Activated naive CD4-positive, alpha-beta T cell treated with anti-CD3 and anti-CD28 coated beads for 36 hours (primary cell): ENCODE measurements at regions of chr16 and their contacts with region 1.

Region 1: GRCh38 chr16:89401641-89402445 is 88.5 kb downstream of the ANKRD11 start:
- DNase-seq: no peak
- H3K4me3 Mint-ChIP-seq: no peak overlapping the region
- H3K27ac Mint-ChIP-seq: peak overlapping the region; percentile 68
- H3K4me1 Mint-ChIP-seq: peaks cover 80% of the 10 kb centered on the region
- H3K27me3 Mint-ChIP-seq: no peaks in the 10 kb centered on the region

Region 2: DNA sequence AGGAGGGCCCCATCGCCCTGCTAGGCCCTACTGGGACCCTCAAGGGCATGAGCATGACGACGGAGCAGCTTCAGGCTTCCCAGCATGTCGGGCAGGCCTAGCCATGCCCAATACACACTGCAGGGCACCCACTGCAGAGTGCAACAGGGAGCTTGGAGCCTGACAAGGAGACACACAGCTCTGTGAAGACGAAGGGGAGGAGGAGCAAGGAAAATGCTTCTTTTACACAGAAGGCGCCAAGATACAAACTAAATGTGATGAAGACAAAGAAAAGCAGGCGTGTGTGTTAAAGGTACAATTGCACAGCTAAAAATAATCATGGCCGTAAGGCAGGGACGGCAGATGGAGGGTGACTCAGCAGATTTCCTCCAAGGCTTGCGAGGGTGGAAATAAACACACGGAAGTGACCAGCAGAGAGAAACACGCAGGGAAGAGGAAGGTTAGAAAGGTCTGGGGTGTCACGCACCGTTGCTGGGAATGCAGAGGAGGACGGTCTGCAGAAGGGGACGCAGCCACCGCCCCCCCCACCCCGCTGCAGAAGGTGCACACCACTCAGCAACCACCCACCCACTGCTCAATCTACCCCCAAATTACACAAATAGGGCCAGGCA is 75.9 kb before region 1 on chr16:
- CTCF ChIA-PET with region 1: no interaction called
- intact Hi-C with region 1: loop called (anchors 5 kb)
- DNase-seq: peak; percentile 44
- H3K4me3 Mint-ChIP-seq: no peak overlapping the region
- H3K27ac Mint-ChIP-seq: peak overlapping the region; percentile 46
- H3K4me1 Mint-ChIP-seq: peaks cover 89% of the 10 kb centered on the region
- H3K27me3 Mint-ChIP-seq: no peaks in the 10 kb centered on the region